Activated CD4-positive, alpha-beta memory T cell treated with anti-CD3 and anti-CD28 coated beads, Interleukin-2, amount 10 ng/mL, durations not matched to agents 7 days and 5 days (primary cell): ENCODE measurements at regions of chr12 and their contacts with region 1.

Region 1: DNA sequence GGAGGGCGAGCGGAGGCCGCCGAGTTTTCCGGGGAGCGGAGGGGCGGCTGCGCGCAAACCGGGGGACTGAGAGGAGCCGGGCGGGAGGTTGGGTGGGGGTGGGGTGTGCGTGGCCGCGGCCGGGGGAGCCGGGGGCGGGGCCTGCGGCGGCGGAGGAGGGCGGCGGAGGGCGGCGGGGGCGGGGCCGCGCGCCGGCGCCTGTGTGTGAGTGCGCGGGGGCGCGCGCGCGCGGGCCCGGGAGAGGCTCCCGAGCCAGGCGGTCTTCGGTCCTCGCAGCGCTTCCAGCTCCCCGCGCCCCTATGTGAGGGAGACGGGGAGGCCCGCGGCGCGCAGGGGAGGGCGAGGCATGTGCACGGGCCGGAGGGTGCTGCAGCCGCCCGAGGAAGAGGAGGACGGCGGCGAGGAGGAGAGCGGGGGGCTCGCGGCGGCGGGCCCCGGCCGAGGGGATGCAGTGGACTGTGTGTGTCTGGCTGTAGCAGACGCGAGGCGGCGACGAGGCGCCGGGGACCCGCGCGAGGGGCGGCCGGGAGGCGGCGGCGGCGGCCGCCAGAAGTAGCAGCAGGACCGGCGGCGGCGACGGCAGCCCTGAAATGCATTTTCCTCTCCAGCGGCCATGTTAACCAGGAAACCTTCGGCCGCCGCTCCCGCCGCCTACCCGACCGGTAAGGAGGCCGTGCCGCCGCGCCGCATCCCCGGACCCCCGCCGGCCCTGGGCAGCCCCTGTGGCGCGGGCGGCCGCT is at the start of gene DYRK2:
- DNase-seq: peak; percentile 76
- H3K4me3 Mint-ChIP-seq: peak within 1 kb of the TSS; percentile 99
- H3K27ac Mint-ChIP-seq: peak within 1 kb of the TSS; percentile 82
- H3K4me1 Mint-ChIP-seq: peaks cover 30% of the 10 kb centered on the region
- H3K27me3 Mint-ChIP-seq: peaks cover 14% of the 10 kb centered on the region
- total RNA-seq, gene DYRK2: 49.5 to 53.5 TPM

Region 2: DNA sequence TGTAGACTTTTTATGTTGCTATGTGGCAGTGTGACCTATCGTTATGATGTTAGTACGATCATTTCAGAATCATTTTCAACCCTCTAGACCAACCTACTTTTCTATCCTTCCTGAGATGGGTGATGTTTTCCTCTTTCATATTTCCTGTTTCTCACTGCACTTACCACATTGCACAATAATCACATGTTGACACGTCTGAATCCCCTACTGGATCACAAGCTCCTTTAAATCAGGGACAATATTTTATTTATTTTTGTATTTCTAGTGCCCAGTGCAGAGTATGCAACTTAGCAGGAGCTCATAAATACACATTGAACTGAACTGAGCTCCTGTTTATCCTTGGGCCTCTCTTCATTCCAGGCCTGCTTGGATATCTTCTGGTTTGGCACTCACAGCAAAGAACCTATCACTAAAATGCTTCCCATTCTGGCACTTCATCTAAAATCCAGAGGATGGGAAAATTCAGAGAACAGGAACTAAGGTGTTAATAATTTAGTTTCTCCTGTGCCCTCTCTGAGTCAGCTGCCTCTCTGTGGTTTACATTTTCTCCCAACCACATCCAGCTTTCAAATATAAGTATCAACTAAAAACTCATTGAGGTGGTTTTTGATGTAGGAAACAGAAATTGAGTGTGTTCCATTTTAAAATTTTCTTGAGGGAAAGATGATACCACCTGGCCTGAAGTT is 69.6 kb before region 1 on chr12:
- CTCF ChIA-PET with region 1: interaction called, 3 read pairs
- POLR2A ChIA-PET with region 1: interaction called, 11 read pairs
- DNase-seq: peak; percentile 31
- H3K4me3 Mint-ChIP-seq: peak overlapping the region; percentile 18
- H3K27ac Mint-ChIP-seq: peak overlapping the region; percentile 84
- H3K4me1 Mint-ChIP-seq: peaks cover 23% of the 10 kb centered on the region
- H3K27me3 Mint-ChIP-seq: peaks cover 14% of the 10 kb centered on the region

Region 3: DNA sequence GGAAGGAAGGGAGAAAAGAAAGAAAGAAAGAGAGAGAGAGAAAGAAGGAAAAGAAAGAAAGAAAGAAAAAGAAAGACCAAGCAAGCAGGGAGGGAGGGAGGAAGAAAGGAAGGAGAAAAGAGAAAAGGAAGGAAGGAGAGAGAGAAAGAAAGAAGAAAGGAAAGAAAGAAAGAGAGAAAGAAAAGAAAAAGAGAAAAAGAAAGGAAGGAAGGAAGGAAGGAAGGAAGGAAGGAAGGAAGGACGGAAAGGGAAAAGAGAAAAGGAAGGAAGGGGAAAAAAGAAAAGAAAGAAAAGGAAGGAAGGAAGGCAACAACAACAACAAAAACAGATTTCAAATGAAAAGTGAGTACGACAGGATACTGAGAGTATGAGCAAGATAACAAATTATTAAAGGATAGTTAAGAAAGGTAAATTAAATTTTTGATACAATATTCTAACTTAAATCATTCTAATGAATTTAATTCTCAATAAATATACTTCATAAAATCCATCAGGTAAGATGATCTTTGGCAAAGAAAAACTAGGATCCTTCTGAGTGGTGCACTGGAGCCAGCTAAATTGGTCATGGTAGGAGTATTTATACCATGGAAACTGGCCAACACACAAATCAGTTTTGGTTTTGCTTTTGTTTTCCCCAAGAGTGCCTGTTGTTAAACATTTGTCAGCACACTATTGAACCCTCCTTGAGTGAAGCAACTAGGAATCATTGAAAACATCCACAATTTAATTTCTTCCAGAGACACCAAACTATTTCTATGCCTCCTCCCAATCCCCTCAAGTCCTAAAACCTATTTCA is 56.3 kb before region 1 on chr12:
- CTCF ChIA-PET with region 1: no interaction called
- POLR2A ChIA-PET with region 1: interaction called, 14 read pairs
- DNase-seq: peak; percentile 19
- H3K4me3 Mint-ChIP-seq: no peak overlapping the region
- H3K27ac Mint-ChIP-seq: peak overlapping the region; percentile 46
- H3K4me1 Mint-ChIP-seq: peaks cover 42% of the 10 kb centered on the region
- H3K27me3 Mint-ChIP-seq: peaks cover 2% of the 10 kb centered on the region

Region 4: DNA sequence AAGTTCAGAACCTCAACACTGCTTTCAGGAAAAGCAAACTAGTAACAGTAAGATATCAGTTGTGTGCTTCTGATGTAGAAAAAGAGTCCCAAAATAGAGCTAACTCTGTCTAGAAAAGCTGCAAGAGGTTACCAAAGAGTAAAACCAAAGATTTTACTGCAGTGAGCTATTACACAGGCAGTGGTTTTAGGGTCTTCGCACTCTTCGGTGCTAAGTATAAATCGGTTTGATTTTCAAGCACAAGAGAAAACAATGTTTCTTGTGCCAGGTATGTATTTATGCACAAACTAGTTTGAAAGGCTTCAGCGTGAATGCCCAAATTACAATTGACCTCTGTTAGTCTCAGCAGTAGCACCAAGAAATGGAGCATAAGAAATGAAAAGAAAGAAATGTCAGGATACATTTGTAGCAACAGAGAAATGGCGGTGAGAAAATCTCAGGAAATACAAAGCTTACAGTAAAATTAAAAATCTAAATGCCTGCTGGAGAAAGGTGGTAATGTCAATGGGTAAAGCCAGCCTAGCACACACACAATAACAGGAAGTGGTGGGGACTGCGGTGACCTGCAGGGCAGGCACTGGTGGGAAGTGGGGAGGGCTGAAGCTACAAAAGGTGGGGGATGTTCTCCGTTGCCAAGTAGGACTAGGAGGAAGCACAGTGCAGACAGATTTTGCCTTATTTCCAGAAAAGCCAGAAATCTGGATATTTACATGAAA is 18.2 kb before region 1 on chr12:
- CTCF ChIA-PET with region 1: interaction called, 10 read pairs
- POLR2A ChIA-PET with region 1: interaction called, 75 read pairs
- DNase-seq: peak; percentile 91
- H3K4me3 Mint-ChIP-seq: peak overlapping the region; percentile 23
- H3K27ac Mint-ChIP-seq: peak overlapping the region; percentile 90
- H3K4me1 Mint-ChIP-seq: peaks cover 44% of the 10 kb centered on the region
- H3K27me3 Mint-ChIP-seq: peaks cover 9% of the 10 kb centered on the region